A549 (cell line): ENCODE measurements at regions of chr5 and their contacts with region 1.

Region 1: DNA sequence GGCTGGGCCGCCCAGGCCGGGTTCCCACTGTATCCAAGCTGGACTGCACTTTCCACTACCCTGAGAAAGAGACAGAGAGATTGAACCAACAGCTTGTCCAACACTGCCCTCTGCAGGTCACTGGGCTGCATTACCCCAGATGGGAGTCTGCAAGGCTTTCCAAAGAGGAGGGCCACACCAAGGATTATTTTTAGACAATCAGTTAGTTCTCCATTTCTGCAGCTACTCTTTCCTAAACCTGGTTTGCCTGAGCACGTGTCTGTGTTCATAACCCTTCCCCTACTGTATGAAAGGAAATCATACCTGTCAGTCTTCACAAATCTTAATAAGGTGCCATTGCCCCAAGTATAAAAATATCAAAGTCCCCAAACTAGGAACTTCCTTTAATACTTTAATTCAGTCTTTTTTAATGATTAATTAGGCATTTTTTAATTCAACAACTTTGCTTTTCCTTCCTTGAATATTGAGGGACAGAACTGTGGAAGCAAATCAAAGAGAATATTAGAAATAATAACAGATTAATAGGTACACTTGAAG is 13.4 kb upstream of the FGF1 start:
- DNase-seq: peak; percentile 76 to 78
- ATAC-seq: peak; percentile 96 to 98
- H3K4me3 ChIP-seq: no peak overlapping the region
- H3K27ac ChIP-seq: no peak overlapping the region
- H3K4me1 ChIP-seq: 0 out of 3 replicates have a peak, but pooled peaks cover 4% of the 10 kb centered on the region
- CTCF ChIP-seq: peak; percentile 97
- EP300 ChIP-seq: no peak
- POLR2A ChIP-seq: no peak
- RAD21 ChIP-seq: peak; percentile 99 to 100

Region 2: DNA sequence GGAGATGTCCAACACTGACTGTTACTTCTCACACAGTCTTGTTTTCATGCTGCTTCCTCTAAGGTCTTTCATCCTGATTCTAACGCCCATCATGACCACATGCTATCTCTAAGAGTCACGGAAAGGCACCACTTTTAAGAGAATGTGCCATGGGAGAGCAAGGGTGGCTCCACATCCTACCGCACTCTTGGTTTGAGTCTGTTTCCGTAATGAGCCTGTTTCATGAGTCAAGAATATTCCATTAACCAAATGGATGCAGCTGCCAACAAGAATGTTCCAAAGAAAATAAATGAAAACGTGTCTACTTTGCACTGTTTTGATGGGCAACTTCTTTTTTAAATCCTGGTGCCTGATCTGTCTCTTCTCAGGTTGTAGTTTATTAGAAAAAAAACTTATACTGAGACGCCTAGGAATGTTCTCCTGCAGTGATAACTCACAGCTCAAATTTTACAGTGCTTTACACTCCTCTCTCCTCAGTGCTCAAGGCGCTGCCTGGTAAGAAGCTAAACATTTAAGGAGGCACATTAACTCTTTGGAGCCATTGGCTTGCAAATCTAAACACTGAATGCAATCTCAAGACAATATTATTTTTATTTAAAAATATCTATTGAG is 137.7 kb before region 1 on chr5:
- CTCF ChIA-PET with region 1: no interaction called
- POLR2A ChIA-PET with region 1: no interaction called
- DNase-seq: no peak
- ATAC-seq: no peak
- H3K4me3 ChIP-seq: no peak overlapping the region
- H3K27ac ChIP-seq: no peak overlapping the region
- H3K4me1 ChIP-seq: no peaks in the 10 kb centered on the region
- CTCF ChIP-seq: no peak
- EP300 ChIP-seq: no peak
- POLR2A ChIP-seq: no peak
- RAD21 ChIP-seq: no peak

Region 3: GRCh38 chr5:142587354-142587965 is 111.8 kb before region 1 on chr5:
- CTCF ChIA-PET with region 1: interaction called, 32 read pairs
- POLR2A ChIA-PET with region 1: no interaction called
- DNase-seq: peak; percentile 22 to 52
- ATAC-seq: peak; percentile 64 to 78; a peak in 5 of 6 replicates
- H3K4me3 ChIP-seq: no peak overlapping the region
- H3K27ac ChIP-seq: no peak overlapping the region
- H3K4me1 ChIP-seq: no peaks in the 10 kb centered on the region
- CTCF ChIP-seq: peak; percentile 77
- EP300 ChIP-seq: no peak
- POLR2A ChIP-seq: no peak
- RAD21 ChIP-seq: peak; percentile 59 to 70

Region 4: GRCh38 chr5:142605611-142606010 is 93.6 kb before region 1 on chr5:
- CTCF ChIA-PET with region 1: interaction called, 212 read pairs
- POLR2A ChIA-PET with region 1: no interaction called
- DNase-seq: no peak
- ATAC-seq: no peak
- H3K4me3 ChIP-seq: no peak overlapping the region
- H3K27ac ChIP-seq: no peak overlapping the region
- H3K4me1 ChIP-seq: peaks cover 28% of the 10 kb centered on the region
- CTCF ChIP-seq: no peak
- EP300 ChIP-seq: no peak
- POLR2A ChIP-seq: no peak
- RAD21 ChIP-seq: no peak

Region 5: DNA sequence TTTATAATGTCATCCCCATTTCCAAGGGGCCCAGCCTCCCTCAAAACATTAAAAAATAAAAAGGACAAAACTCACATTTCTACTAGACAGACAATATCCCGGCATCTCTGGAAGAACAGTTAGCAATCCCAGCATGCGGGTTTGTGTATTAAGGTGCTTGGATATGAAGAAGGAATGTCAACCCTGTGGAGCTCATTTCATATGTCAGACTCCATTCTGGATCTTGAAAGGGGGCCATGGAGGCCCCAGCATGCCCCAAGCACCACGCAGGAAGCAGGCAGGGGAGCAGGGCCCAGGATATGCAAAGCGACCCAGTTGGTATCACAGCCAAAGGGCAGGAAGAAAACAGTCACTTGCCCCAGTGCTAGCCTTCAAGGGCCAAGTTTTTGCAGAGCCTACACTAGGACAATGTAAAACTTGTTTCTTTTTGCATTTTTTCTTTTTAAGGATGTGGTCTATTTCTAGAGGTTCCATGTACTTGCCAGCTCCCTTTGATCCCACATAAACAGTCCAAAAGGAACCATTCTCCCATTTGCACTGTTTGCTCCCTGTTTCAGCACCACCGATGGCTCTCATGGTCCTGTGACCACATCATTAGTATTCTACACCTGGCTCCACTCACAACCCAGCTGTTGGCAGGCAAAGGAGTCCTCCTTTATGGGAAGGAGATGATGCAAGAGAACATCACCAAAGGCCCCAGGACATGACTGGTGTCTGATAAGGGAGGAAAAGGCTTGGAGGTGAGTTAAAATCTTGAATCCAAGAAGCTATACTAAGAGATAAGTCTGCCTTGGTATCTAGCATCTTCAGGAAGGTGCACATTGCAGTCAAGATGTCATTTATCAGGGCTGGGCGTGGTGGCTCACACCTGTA is 71.6 kb before region 1 on chr5:
- CTCF ChIA-PET with region 1: interaction called, 30 read pairs
- POLR2A ChIA-PET with region 1: no interaction called
- DNase-seq: no peak
- ATAC-seq: no peak
- H3K4me3 ChIP-seq: no peak overlapping the region
- H3K27ac ChIP-seq: no peak overlapping the region
- H3K4me1 ChIP-seq: no peaks in the 10 kb centered on the region
- CTCF ChIP-seq: no peak
- EP300 ChIP-seq: no peak
- POLR2A ChIP-seq: no peak
- RAD21 ChIP-seq: no peak

Region 6: GRCh38 chr5:142644640-142645361 is 54.5 kb before region 1 on chr5:
- CTCF ChIA-PET with region 1: interaction called, 583 read pairs
- POLR2A ChIA-PET with region 1: no interaction called
- DNase-seq: peak; percentile 83 to 85
- ATAC-seq: peak; percentile 94 to 97
- H3K4me3 ChIP-seq: no peak overlapping the region
- H3K27ac ChIP-seq: peak overlapping the region; percentile 3 to 77; a peak in 4 of 6 replicates
- H3K4me1 ChIP-seq: peaks cover 18% of the 10 kb centered on the region
- CTCF ChIP-seq: no peak
- EP300 ChIP-seq: no peak
- POLR2A ChIP-seq: no peak
- RAD21 ChIP-seq: no peak

Region 7: DNA sequence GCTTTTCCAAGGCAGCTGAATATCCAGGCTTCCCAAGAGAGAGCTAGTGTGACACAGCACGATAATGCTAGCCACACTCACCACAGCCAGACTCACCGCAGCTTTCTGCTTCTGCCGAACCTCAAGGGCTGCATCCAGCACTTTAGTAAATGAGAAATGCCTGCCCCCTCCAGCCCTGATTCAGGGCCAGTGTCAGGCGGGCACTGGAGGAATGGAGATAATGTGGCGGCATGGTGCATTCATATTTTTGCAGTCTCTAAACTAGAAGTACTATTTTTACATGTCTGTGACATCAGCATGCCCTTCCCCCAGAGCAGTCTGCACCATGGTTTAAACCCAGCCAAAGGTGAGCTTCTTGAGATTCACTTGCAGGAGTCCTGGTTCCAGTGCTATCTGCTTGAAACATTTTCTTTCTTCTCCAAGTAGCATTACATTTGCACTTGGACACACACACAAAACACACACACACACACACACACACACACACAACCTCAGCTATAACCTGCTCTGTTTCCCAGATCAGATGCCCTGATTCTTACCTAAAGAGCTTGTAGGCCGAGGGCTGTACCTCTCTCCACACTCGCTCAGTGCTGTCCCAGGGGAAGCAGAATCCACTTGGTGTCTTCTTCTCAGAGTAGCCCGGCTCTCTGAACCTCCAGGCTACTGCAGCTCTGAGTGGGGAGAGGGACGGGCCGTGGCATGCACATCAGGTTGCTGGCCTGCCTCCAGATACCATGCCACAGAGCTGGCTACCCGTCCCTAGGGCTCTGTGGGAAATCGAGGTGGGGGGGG is 13.6 kb before region 1 on chr5 and contains the start of gene FGF1:
- CTCF ChIA-PET with region 1: interaction called, 66 read pairs
- POLR2A ChIA-PET with region 1: no interaction called
- DNase-seq: no peak
- ATAC-seq: peak in 1 of 2 experiments; percentile 35; a peak in 3 of 6 replicates
- H3K4me3 ChIP-seq: no peak within 1 kb of the TSS
- H3K27ac ChIP-seq: no peak within 1 kb of the TSS
- H3K4me1 ChIP-seq: peaks cover 11% of the 10 kb centered on the region
- CTCF ChIP-seq: no peak
- EP300 ChIP-seq: no peak
- POLR2A ChIP-seq: no peak
- RAD21 ChIP-seq: no peak
- polyA plus RNA-seq, gene FGF1: 0.05 and 0.15 TPM in 2 replicates

Region 8: GRCh38 chr5:142888469-142889085 is 189.3 kb after region 1 on chr5:
- CTCF ChIA-PET with region 1: interaction called, 1,307 read pairs
- POLR2A ChIA-PET with region 1: no interaction called
- DNase-seq: peak; percentile 60 to 72
- ATAC-seq: peak; percentile 81 to 92
- H3K4me3 ChIP-seq: no peak overlapping the region
- H3K27ac ChIP-seq: no peak overlapping the region
- H3K4me1 ChIP-seq: 0 out of 3 replicates have a peak, but pooled peaks cover 3% of the 10 kb centered on the region
- CTCF ChIP-seq: peak; percentile 91
- EP300 ChIP-seq: no peak
- POLR2A ChIP-seq: no peak
- RAD21 ChIP-seq: peak; percentile 90 to 93